ENCODE measurements at regions of chr14 and their contacts with region 1.

Region 1: DNA sequence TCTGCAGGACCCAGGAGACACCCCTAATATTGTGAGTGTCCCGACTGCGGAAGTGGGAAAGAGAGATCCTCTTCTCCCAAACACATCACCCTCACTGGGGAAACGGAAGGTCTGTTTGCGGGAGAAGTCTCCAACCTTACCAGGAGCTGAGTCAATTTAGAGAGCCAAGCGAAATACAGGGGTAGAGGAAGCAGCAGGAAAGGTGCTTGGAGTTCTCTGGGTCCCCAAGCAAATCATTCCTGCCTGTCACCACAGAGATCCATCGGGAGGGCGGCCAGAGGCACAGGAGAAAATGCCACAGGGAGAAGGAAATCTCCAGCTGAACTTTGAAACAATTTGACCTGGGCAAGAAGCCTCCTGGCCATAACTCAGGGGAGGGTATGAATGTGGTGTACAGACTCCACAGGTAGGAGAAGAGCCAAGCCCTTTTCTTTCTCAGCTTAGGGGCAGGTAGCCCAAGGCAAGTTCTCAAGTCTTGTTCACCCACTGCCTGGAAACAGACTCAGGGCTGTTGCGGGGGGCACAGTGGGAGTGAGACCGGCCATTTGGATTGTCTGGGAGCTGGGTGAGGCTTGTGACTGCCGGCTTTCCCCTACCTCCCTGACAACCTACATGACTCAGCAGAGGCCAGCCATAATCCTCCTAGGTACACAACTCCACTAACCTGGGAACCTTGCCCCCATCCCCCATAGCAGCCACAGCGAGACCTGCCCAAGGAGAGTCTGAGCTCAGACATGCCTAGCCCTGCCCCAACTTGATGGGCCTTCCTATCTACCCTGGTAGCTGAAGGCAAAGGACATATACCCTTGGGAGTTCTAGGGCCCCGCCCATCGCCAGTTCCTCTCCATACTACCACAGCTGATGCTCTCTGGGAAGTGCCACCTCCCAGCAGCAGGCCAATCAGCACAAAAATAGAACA is 211.9 kb upstream of the ARHGAP5 start:
- DNase-seq: no peak

Region 2: GRCh38 chr14:31955936-31956579 is 90.9 kb after region 1 on chr14:
- intact Hi-C with region 1: loop called in 1 of 2 experiments (anchors 1 kb)
- DNase-seq: no peak

Region 3: DNA sequence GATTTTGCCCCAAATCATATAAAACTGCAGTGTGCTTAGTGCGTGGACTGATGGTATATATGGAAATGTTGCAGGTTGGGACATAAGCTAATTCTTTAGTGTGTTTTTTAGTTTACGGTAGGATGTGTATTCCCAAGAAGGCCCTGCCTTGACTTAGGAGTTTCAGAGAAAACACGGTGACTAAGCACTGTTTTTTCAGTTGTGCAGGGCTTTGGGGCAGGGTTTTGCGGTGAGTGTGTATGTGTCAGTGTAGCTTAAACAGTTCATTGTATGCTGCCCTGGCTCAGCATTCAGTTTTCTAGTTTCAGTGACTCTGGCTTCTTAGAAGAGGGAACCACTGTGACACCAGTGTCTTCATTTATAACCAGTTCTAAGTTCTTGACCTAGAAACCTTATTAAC is 565.1 kb after region 1 on chr14:
- intact Hi-C with region 1: no loop called
- DNase-seq: no peak